ENCODE measurements at regions of chr15 and their contacts with region 1.

Region 1: GRCh38 chr15:29910068-29910467 is 87.8 kb upstream of the TJP1 start:
- DNase-seq: peak; percentile 55
- ATAC-seq: peak; percentile 92
- H3K4me3 ChIP-seq: no peak overlapping the region
- H3K27ac ChIP-seq: no peak overlapping the region
- H3K4me1 ChIP-seq: peaks cover 10% of the 10 kb centered on the region
- H3K27me3 ChIP-seq: no peaks in the 10 kb centered on the region
- CTCF ChIP-seq: no peak

Region 2: DNA sequence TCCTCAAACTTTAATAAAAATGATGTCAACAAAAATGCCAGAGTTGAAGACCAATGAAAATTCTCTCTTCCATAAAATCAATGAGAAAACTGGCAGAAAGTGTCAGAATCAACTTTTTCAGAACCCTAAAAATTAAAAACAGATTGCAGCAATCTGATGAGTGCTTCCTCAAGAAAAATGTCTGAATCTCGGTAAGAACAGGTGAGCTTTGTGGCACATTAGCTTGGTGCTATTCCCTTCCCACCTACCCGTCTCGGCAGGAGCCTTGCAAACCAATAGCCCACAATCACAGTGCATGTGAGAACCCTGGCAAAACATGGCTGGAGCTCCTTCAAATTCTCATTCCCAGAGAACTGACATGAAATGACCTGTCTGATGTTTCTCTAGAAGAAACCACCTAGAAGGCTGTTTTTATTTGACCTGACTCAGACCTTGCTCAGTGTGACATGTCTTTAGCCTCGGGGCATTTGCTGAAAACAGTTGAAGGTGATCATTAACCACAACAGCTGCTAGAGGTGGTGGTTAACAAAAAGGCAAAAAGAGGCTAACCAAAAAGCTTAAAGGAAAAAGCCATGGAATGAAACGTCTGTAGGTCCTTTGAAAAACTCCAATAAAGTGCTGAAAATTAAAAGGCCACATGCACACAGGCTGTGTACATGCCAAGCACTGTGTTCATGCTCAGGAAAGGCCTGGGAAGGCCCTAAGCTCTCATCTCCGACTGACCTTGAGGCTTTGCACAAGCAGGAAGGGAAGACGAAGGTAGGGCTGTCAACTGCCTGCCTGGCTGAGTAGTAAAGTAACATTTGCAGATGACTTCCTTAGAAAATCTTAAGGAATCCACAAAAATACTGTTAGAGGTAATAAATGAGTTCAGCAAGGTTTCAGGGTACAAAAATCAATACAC is 387.4 kb before region 1 on chr15:
- CTCF ChIA-PET with region 1: no interaction called
- POLR2A ChIA-PET with region 1: no interaction called
- intact Hi-C with region 1: no loop called
- DNase-seq: peak; percentile 90
- ATAC-seq: peak; percentile 92
- H3K4me3 ChIP-seq: no peak overlapping the region
- H3K27ac ChIP-seq: no peak overlapping the region
- H3K4me1 ChIP-seq: peaks cover 12% of the 10 kb centered on the region
- H3K27me3 ChIP-seq: no peaks in the 10 kb centered on the region
- CTCF ChIP-seq: no peak

Region 3: DNA sequence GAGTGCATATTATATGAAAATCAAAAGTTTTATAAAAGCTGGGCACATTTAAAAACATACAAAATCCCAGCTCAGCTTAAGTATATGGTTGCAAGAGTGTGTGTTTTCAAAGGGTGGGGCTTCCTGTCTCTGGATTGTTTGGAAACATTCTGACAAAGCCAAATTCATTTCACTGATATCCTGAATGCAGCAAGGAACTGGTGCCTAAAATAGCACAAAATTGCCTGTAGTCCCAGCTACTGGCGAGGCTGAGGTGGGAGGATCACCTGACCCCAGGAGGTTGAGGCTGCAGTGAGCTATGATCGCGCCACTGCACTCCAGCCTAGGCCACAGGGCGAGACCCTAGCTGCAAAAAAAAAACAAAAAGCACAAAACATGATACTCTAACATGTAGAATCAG is 74.8 kb before region 1 on chr15:
- CTCF ChIA-PET with region 1: no interaction called
- POLR2A ChIA-PET with region 1: no interaction called
- intact Hi-C with region 1: loop called (anchors 1 kb)
- DNase-seq: peak; percentile 66
- ATAC-seq: peak; percentile 98
- H3K4me3 ChIP-seq: no peak overlapping the region
- H3K27ac ChIP-seq: peak overlapping the region; percentile 9; the same call in 1 of the 2 replicates
- H3K4me1 ChIP-seq: peaks cover 13% of the 10 kb centered on the region
- H3K27me3 ChIP-seq: no peaks in the 10 kb centered on the region
- CTCF ChIP-seq: no peak